IMR-90 (cell line): ENCODE measurements at regions of chr9 and their contacts with region 1.

Region 1: GRCh38 chr9:36250079-36250478 is 8.2 kb downstream of the GNE start:
- DNase-seq: no peak
- ATAC-seq: no peak
- H3K4me3 ChIP-seq: no peak overlapping the region
- H3K27ac ChIP-seq: no peak overlapping the region
- H3K4me1 ChIP-seq: no peaks in the 10 kb centered on the region
- H3K27me3 ChIP-seq: no peaks in the 10 kb centered on the region
- CTCF ChIP-seq: no peak
- POLR2A ChIP-seq: no peak
- RAD21 ChIP-seq: no peak

Region 2: GRCh38 chr9:36328798-36329411 is 78.8 kb after region 1 on chr9:
- CTCF ChIA-PET with region 1: interaction called, 12 read pairs
- POLR2A ChIA-PET with region 1: no interaction called
- dilution Hi-C with region 1: no loop called
- in situ Hi-C with region 1: loop called (anchors 5 kb)
- intact Hi-C with region 1: loop called (anchors 1 kb)
- DNase-seq: peak; percentile 80
- ATAC-seq: peak; percentile 71
- H3K4me3 ChIP-seq: peak overlapping the region; percentile 4; the same call in 1 of the 2 replicates
- H3K27ac ChIP-seq: no peak overlapping the region
- H3K4me1 ChIP-seq: peaks cover 3% of the 10 kb centered on the region
- H3K27me3 ChIP-seq: no peaks in the 10 kb centered on the region
- CTCF ChIP-seq: peak; percentile 80
- POLR2A ChIP-seq: no peak
- RAD21 ChIP-seq: peak; percentile 80

Region 3: GRCh38 chr9:36400332-36401163 is 150.5 kb after region 1 on chr9:
- CTCF ChIA-PET with region 1: no interaction called
- POLR2A ChIA-PET with region 1: no interaction called
- dilution Hi-C with region 1: no loop called
- in situ Hi-C with region 1: no loop called
- intact Hi-C with region 1: loop called (anchors 2 kb)
- DNase-seq: peak; percentile 75
- ATAC-seq: peak; percentile 91
- H3K4me3 ChIP-seq: peak overlapping the region; percentile 65
- H3K27ac ChIP-seq: peak overlapping the region; percentile 97
- H3K4me1 ChIP-seq: peaks cover 2% of the 10 kb centered on the region; the same call in 1 of the 2 replicates
- H3K27me3 ChIP-seq: no peaks in the 10 kb centered on the region
- CTCF ChIP-seq: no peak
- POLR2A ChIP-seq: no peak; the same call in 1 of the 2 replicates
- RAD21 ChIP-seq: no peak